PC-3 (cell line): ENCODE measurements at regions of chr3 and their contacts with region 1.

Region 1: GRCh38 chr3:80060664-80061063 is 292.9 kb upstream of the ROBO1 start:
- DNase-seq: peak; percentile 46
- ATAC-seq: peak; percentile 45; the same call in 1 of the 2 replicates
- H3K4me3 ChIP-seq: no peak overlapping the region
- H3K27ac ChIP-seq: no peak overlapping the region
- H3K4me1 ChIP-seq: no peaks in the 10 kb centered on the region
- H3K27me3 ChIP-seq: no peaks in the 10 kb centered on the region
- CTCF ChIP-seq: peak; percentile 49

Region 2: DNA sequence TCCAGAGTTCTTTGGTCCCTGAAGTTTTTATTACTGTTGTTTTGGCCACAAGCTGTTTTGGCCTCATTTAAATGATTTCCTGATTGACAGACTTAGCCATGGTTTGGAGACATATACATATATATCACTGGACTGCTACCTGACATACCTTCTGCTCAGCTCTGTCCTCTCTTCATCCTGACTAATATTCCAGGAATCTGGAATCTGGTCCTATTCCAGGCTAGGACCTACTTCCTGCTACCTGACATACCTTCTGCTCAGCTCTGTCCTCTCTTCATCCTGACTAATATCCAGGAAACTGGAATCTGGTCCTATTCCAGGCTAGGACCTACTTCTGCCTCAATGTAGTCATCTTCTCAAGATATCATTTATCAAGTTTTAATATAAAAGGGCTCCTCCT is 431.5 kb after region 1 on chr3:
- CTCF ChIA-PET with region 1: no interaction called
- POLR2A ChIA-PET with region 1: no interaction called
- intact Hi-C with region 1: loop called (anchors 10 kb)
- DNase-seq: peak; percentile 47
- ATAC-seq: peak; percentile 43
- H3K4me3 ChIP-seq: no peak overlapping the region
- H3K27ac ChIP-seq: no peak overlapping the region
- H3K4me1 ChIP-seq: no peaks in the 10 kb centered on the region
- H3K27me3 ChIP-seq: no peaks in the 10 kb centered on the region
- CTCF ChIP-seq: no peak

Region 3: GRCh38 chr3:80526153-80526552 is 465.5 kb after region 1 on chr3:
- CTCF ChIA-PET with region 1: interaction called, 3 read pairs
- POLR2A ChIA-PET with region 1: no interaction called
- intact Hi-C with region 1: loop called (anchors 10 kb)
- DNase-seq: peak; percentile 39
- ATAC-seq: no peak; the same call in 1 of the 2 replicates
- H3K4me3 ChIP-seq: no peak overlapping the region
- H3K27ac ChIP-seq: no peak overlapping the region
- H3K4me1 ChIP-seq: peaks cover 6% of the 10 kb centered on the region; the same call in 1 of the 2 replicates
- H3K27me3 ChIP-seq: no peaks in the 10 kb centered on the region
- CTCF ChIP-seq: peak; percentile 86

Region 4: GRCh38 chr3:80688814-80689213 is 628.1 kb after region 1 on chr3:
- CTCF ChIA-PET with region 1: no interaction called
- POLR2A ChIA-PET with region 1: no interaction called
- intact Hi-C with region 1: loop called (anchors 2 kb)
- DNase-seq: peak; percentile 57
- ATAC-seq: peak; percentile 57
- H3K4me3 ChIP-seq: no peak overlapping the region
- H3K27ac ChIP-seq: no peak overlapping the region
- H3K4me1 ChIP-seq: no peaks in the 10 kb centered on the region
- H3K27me3 ChIP-seq: no peaks in the 10 kb centered on the region
- CTCF ChIP-seq: peak; percentile 55